ENCODE measurements at regions of chr2 and their contacts with region 1.

Region 1: DNA sequence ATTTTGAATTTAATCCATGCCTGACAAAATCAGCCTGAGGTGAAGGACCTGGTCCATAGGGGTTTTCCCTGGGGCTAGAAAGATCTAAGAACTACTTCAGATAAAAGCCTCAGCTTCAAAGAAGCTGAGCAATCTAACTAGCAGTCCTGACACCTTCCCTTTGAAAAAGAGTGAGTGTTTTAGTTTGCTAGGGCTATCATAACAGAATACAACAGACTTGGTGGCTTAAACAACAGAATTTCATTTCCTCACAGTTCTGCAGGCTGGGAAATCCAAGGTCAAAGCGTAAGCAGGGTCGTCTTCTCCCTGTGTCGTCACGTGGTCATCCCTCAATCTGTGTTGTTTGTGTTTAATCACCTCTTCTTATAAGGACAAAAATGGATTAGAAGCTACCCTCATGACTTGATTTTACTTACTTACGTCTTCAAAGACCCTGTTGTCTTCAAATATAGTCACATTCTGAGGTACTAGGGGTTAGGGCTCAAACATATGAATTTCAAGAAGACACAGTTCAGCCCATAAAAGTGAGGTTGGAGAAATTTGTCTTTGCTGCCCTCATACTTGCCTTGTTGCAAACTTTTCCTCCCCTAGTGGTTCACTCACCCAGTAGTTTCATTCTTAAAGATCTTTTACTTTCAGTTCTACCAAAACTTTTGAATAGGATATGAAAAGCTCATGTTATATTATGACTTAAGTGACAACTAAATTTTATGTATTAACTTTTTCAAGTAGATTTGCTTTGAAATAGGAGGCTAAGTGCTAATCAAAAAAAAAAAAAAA is 673.8 kb downstream of the ARHGAP15 start:
- ATAC-seq: no peak
- H3K4me3 ChIP-seq: no peak overlapping the region
- H3K27ac ChIP-seq: no peak overlapping the region
- H3K4me1 ChIP-seq: no peaks in the 10 kb centered on the region

Region 2: DNA sequence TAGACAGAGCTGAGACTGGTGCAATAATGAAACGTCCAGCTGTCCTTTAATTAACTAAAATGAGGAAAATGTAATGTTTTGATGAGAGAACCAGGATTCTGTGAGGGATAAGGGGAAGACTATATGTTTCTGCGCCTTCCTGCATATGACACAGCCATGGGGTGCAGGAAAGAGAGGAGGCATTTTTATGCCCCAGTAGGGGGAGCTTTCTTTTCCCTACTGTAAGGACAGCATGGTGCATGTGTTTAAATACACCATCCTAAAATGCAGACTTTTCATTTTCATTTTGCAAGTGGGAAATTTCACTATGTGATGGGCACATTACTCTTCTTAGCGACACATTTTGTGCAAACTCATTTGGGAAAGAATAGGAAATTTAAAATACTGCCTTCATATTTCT is 227.7 kb before region 1 on chr2:
- in situ Hi-C with region 1: loop called in 1 of 9 experiments (anchors 25 kb)
- ATAC-seq: peak in 1 of 8 experiments; percentile 47
- H3K4me3 ChIP-seq: no peak overlapping the region
- H3K27ac ChIP-seq: no peak overlapping the region
- H3K4me1 ChIP-seq: no peaks in the 10 kb centered on the region